ENCODE measurements at regions of chr18 and their contacts with region 1.

Region 1: GRCh38 chr18:74116633-74117554 is 30.7 kb downstream of the FBXO15 start:
- DNase-seq: peak; percentile 79
- H3K4me3 Mint-ChIP-seq: no peak overlapping the region
- H3K27ac Mint-ChIP-seq: no peak overlapping the region
- H3K4me1 Mint-ChIP-seq: peaks cover 12% of the 10 kb centered on the region
- H3K27me3 Mint-ChIP-seq: peaks cover 1% of the 10 kb centered on the region

Region 2: DNA sequence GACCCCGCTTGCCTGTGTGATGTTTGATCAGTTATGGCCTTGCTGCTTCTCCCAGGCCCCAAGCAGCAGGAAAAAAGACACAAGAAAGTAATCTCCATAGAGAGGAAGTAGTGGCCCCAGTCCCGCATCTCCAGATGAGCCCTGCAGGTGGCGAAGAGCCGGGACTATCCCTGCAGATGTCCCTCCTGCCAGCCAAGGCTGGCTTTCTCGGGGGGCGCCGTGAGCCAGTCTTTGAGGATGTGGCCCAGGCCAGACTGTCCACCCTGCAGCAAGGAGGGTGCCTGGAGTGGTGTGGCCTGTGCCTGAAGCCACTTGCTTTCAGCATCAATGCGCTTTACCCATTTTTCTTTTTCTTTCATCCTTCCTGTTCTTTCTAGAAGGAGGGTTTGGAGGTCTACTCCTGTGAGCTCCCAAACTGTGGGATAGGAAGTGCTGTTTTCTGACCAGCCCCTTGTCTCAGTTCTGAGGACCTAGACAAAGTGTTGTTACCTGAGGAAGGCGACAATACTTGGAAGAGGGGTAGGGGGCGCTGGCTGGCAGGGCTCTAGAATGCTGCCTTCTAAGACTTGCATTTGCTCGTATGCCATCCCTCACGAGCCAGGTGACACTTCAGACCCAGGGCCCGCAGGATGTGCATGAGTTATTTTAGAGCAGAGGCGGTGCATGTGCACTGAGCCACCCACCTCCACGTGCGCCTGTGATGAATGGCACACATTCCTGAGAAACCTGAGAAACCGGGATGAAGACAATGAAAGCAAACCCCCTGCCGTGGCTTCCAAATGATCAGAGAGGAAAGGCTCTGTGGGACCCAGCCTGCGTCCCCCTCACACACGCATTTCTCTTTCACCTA is 225.1 kb before region 1 on chr18:
- intact Hi-C with region 1: loop called (anchors 5 kb)
- DNase-seq: peak; percentile 55
- H3K4me3 Mint-ChIP-seq: no peak overlapping the region
- H3K27ac Mint-ChIP-seq: no peak overlapping the region
- H3K4me1 Mint-ChIP-seq: no peaks in the 10 kb centered on the region
- H3K27me3 Mint-ChIP-seq: no peaks in the 10 kb centered on the region

Region 3: GRCh38 chr18:74139888-74140287 is 23.0 kb after region 1 on chr18:
- intact Hi-C with region 1: loop called (anchors 2 kb)
- DNase-seq: no peak
- H3K4me3 Mint-ChIP-seq: peak overlapping the region; percentile 79
- H3K27ac Mint-ChIP-seq: peak overlapping the region; percentile 91
- H3K4me1 Mint-ChIP-seq: peaks cover 37% of the 10 kb centered on the region
- H3K27me3 Mint-ChIP-seq: peaks cover 3% of the 10 kb centered on the region

Region 4: GRCh38 chr18:74171910-74172606 is 55.2 kb after region 1 on chr18:
- intact Hi-C with region 1: no loop called
- DNase-seq: no peak
- H3K4me3 Mint-ChIP-seq: peak overlapping the region; percentile 60
- H3K27ac Mint-ChIP-seq: no peak overlapping the region
- H3K4me1 Mint-ChIP-seq: peaks cover 5% of the 10 kb centered on the region
- H3K27me3 Mint-ChIP-seq: peaks cover 25% of the 10 kb centered on the region

Region 5: DNA sequence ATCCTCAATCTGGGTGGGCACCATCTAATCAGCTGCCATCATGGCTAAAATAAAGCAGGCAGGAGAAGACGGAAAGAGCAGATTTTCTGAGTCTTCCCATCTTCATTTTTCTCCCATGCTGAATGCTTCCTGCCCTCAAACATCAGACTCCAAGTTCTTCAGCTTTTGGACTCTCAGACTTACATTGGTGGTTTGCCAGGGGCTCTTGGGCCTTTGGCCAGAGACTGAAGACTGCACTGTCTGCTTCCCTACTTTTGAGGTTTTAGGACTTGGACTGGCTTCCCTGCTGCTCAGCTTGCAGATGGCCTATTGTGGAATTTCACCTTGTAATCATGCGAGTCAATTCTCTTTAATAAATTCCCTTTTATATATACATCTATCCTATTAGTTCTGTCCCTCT is 303.6 kb after region 1 on chr18:
- intact Hi-C with region 1: no loop called
- DNase-seq: no peak
- H3K4me3 Mint-ChIP-seq: no peak overlapping the region
- H3K27ac Mint-ChIP-seq: no peak overlapping the region
- H3K4me1 Mint-ChIP-seq: no peaks in the 10 kb centered on the region
- H3K27me3 Mint-ChIP-seq: peaks cover 21% of the 10 kb centered on the region

Measured in activated CD4-positive, alpha-beta T cell treated with anti-CD3 and anti-CD28 coated beads, Interleukin-2, amount 10 ng/mL, durations not matched to agents 24 days and 14 days (primary cell).